ENCODE measurements at regions of chrX and their contacts with region 1.

Region 1: GRCh38 chrX:50081282-50081889 is 119.4 kb downstream of the AKAP4 start:
- DNase-seq: peak; percentile 54
- H3K4me3 Mint-ChIP-seq: no peak overlapping the region
- H3K27ac Mint-ChIP-seq: peak overlapping the region; percentile 62
- H3K4me1 Mint-ChIP-seq: peaks cover 11% of the 10 kb centered on the region
- H3K27me3 Mint-ChIP-seq: no peaks in the 10 kb centered on the region
- CTCF ChIP-seq: no peak

Region 2: GRCh38 chrX:49884290-49884862 is 197.0 kb before region 1 on chrX:
- CTCF ChIA-PET with region 1: interaction called, 3 read pairs
- intact Hi-C with region 1: loop called (anchors 1 kb)
- DNase-seq: peak; percentile 78
- H3K4me3 Mint-ChIP-seq: no peak overlapping the region
- H3K27ac Mint-ChIP-seq: no peak overlapping the region
- H3K4me1 Mint-ChIP-seq: peaks cover 7% of the 10 kb centered on the region
- H3K27me3 Mint-ChIP-seq: no peaks in the 10 kb centered on the region
- CTCF ChIP-seq: peak; percentile 59

Region 3: GRCh38 chrX:49915361-49916222 is 165.8 kb before region 1 on chrX:
- CTCF ChIA-PET with region 1: interaction called, 4 read pairs
- intact Hi-C with region 1: loop called (anchors 1 kb)
- DNase-seq: peak; percentile 52
- H3K4me3 Mint-ChIP-seq: no peak overlapping the region
- H3K27ac Mint-ChIP-seq: no peak overlapping the region
- H3K4me1 Mint-ChIP-seq: no peaks in the 10 kb centered on the region
- H3K27me3 Mint-ChIP-seq: peaks cover 4% of the 10 kb centered on the region
- CTCF ChIP-seq: peak; percentile 67